ENCODE measurements at regions of chr13 and their contacts with region 1.

Region 1: DNA sequence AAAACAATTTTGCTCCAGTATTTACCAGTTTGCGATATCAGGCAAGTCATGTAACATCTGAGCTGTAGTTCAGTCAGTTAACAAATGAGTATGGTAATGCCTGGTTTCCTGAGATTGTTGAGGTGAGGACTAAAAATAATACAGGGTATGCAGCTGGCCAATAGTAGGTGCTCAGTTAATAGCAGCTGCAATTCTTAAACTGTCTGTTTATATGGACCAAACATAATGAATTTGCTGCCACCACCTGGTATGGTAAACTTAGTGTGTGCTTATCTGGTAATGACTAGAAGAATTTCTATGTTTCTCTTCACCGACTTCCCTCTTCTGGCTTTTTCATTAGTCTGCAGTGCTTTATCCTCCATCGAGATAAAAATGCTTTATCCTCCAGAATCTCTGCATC is 9.1 kb downstream of the ZMYM2 start:
- DNase-seq: no peak
- ATAC-seq: peak; percentile 30
- H3K4me3 Mint-ChIP-seq: no peak overlapping the region
- H3K27ac Mint-ChIP-seq: no peak overlapping the region
- H3K4me1 Mint-ChIP-seq: peaks cover 32% of the 10 kb centered on the region
- H3K27me3 Mint-ChIP-seq: no peaks in the 10 kb centered on the region

Region 2: DNA sequence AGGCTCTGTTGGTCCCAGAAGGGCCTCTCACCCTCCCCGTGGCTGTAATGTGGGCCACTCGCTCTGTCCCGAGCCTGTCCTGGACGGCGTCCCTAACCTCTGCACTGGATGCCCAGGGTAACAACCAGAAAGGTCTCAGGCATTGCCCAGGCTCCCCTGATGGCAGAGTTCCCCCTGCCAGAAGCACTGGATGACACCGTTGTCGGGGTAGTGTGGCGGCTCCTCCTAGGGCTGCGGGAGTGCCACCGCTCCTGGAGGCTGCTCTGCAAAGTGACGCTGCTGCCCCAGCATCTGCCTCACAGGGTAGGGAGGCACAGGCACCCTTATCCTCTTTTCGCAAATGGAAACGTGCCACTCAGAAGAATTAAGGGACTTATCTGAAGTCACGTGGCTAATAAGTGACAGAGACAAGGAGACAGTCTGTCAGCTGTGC is 302.2 kb before region 1 on chr13:
- CTCF ChIA-PET with region 1: no interaction called
- POLR2A ChIA-PET with region 1: no interaction called
- intact Hi-C with region 1: no loop called
- DNase-seq: no peak
- ATAC-seq: no peak
- H3K4me3 Mint-ChIP-seq: no peak overlapping the region
- H3K27ac Mint-ChIP-seq: no peak overlapping the region
- H3K4me1 Mint-ChIP-seq: no peaks in the 10 kb centered on the region
- H3K27me3 Mint-ChIP-seq: no peaks in the 10 kb centered on the region

Region 3: GRCh38 chr13:19845758-19846157 is 121.9 kb before region 1 on chr13:
- CTCF ChIA-PET with region 1: no interaction called
- POLR2A ChIA-PET with region 1: no interaction called
- intact Hi-C with region 1: no loop called
- DNase-seq: peak; percentile 32
- ATAC-seq: peak; percentile 94
- H3K4me3 Mint-ChIP-seq: no peak overlapping the region
- H3K27ac Mint-ChIP-seq: peak overlapping the region; percentile 78
- H3K4me1 Mint-ChIP-seq: peaks cover 16% of the 10 kb centered on the region
- H3K27me3 Mint-ChIP-seq: no peaks in the 10 kb centered on the region

Region 4: DNA sequence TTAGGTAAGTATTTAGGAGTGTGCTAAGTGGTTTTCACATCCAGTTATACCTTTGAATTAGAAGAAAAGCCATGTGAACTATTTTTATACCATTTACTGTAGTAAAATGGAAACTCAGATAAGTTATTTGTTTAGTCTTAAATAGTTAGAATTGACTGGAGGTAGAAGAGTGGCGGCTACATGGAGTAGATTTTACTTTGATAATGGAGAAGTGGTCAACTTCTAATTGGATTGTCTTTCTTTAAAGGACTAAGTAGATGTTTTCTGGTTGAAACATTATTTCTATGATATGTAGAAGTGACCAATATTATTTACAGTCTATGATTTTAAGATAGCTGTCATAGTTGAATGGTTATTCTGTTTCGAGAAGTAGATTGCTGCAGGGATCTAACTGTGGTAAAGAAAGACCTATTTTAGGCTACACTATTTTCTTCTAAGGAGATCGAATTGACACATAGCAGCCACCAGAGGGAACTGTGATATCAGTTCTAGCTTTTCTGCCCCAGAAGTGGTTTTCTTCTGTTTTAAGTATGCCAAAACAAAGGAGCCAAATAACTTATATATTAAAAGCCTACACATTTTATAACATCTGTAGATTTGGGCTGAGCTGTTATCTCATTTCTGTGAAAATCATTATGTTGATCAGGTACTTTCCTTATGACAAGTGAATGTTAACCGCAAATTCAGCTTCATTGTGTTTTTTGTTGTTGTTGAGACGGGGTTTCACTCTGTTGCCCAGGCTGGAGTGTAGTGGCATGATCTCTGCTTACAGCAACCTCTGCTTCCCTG is 17.0 kb after region 1 on chr13:
- CTCF ChIA-PET with region 1: interaction called, 26 read pairs
- POLR2A ChIA-PET with region 1: no interaction called
- intact Hi-C with region 1: no loop called
- DNase-seq: peak; percentile 12
- ATAC-seq: peak; percentile 68
- H3K4me3 Mint-ChIP-seq: no peak overlapping the region
- H3K27ac Mint-ChIP-seq: peak overlapping the region; percentile 34
- H3K4me1 Mint-ChIP-seq: peaks cover 38% of the 10 kb centered on the region
- H3K27me3 Mint-ChIP-seq: no peaks in the 10 kb centered on the region